ENCODE measurements at regions of chr2 and their contacts with region 1.

Region 1: GRCh38 chr2:121356058-121356640 is 71.1 kb upstream of the TFCP2L1 start:
- DNase-seq: peak; percentile 48
- ATAC-seq: peak; percentile 95
- H3K4me3 ChIP-seq: no peak overlapping the region
- H3K27ac ChIP-seq: no peak overlapping the region
- H3K4me1 ChIP-seq: peaks cover 0 to 9% of the 10 kb centered on the region in 2 experiments; a peak in 1 of 4 replicates
- H3K27me3 ChIP-seq: no peaks in the 10 kb centered on the region
- CTCF ChIP-seq: peak; percentile 76 to 82 (median 78)
- POLR2A ChIP-seq: no peak
- RAD21 ChIP-seq: peak; percentile 80

Region 2: DNA sequence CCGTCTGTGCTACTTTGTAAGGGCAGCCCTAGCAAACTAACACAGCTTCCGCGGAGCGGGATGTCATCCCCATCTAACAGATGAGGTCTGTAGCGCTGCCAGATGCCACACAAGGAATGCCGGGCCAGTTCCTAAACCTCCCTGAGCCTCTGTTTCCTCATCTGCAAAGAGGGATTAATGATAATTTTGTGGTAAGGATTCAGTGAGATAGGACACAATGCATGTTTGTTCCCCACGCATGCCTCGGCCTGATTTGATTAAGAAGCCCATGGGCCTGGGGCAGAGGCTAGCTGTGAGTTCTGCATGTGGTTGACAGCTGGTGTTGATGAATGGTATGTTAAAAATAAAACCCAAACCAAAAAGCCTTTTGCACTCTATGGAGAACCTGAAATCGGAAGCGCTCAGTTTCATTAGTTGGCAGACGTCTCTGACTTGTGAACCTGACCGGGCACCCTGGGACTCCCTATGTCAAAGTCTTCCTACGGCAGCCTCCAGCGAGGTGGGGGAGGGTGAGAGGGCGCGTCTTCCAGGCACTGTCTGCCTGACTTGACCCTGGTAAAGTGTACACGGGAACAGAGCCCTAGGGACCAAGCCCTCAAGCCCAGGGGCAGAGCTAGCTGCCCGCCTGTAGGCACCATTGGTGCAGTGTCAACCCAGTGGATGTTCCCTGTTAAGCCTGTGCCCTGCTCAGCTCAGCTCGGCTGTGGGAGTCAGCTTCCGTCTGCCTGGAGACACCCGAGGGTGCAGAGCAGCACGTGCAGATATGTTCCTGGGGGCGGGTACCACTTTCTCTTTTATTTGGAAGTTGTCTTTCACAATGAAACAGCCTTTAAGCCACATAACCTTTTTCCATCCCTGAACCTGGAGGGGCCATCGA is 1025.0 kb before region 1 on chr2:
- CTCF ChIA-PET with region 1: no interaction called
- POLR2A ChIA-PET with region 1: no interaction called
- RAD21 ChIA-PET with region 1: no interaction called
- intact Hi-C with region 1: no loop called
- DNase-seq: no peak
- ATAC-seq: no peak
- H3K4me3 ChIP-seq: no peak overlapping the region
- H3K27ac ChIP-seq: no peak overlapping the region
- H3K4me1 ChIP-seq: no peaks in the 10 kb centered on the region
- H3K27me3 ChIP-seq: 0 out of 2 replicates have a peak, but pooled peaks cover 3% of the 10 kb centered on the region
- CTCF ChIP-seq: no peak
- POLR2A ChIP-seq: no peak
- RAD21 ChIP-seq: no peak

Region 3: GRCh38 chr2:120703330-120703994 is 652.7 kb before region 1 on chr2:
- CTCF ChIA-PET with region 1: no interaction called
- POLR2A ChIA-PET with region 1: no interaction called
- RAD21 ChIA-PET with region 1: no interaction called
- intact Hi-C with region 1: loop called (anchors 5 kb)
- DNase-seq: peak; percentile 59
- ATAC-seq: peak; percentile 87
- H3K4me3 ChIP-seq: no peak overlapping the region
- H3K27ac ChIP-seq: no peak overlapping the region
- H3K4me1 ChIP-seq: peaks cover 16 to 40% of the 10 kb centered on the region in 2 experiments; a peak in 3 of 4 replicates
- H3K27me3 ChIP-seq: no peaks in the 10 kb centered on the region
- CTCF ChIP-seq: no peak
- POLR2A ChIP-seq: no peak
- RAD21 ChIP-seq: no peak

Region 4: GRCh38 chr2:121088251-121089165 is 267.6 kb before region 1 on chr2:
- CTCF ChIA-PET with region 1: interaction called, 21 read pairs
- POLR2A ChIA-PET with region 1: no interaction called
- RAD21 ChIA-PET with region 1: no interaction called
- intact Hi-C with region 1: loop called (anchors 1 kb)
- DNase-seq: no peak
- ATAC-seq: no peak
- H3K4me3 ChIP-seq: no peak overlapping the region
- H3K27ac ChIP-seq: no peak overlapping the region
- H3K4me1 ChIP-seq: no peaks in the 10 kb centered on the region
- H3K27me3 ChIP-seq: no peaks in the 10 kb centered on the region
- CTCF ChIP-seq: no peak
- POLR2A ChIP-seq: no peak
- RAD21 ChIP-seq: no peak

Region 5: GRCh38 chr2:121095257-121096080 is 260.7 kb before region 1 on chr2:
- CTCF ChIA-PET with region 1: interaction called, 73 read pairs
- POLR2A ChIA-PET with region 1: interaction called, 3 read pairs
- RAD21 ChIA-PET with region 1: interaction called, 14 read pairs
- intact Hi-C with region 1: loop called (anchors 1 kb)
- DNase-seq: peak; percentile 72
- ATAC-seq: peak; percentile 97
- H3K4me3 ChIP-seq: no peak overlapping the region
- H3K27ac ChIP-seq: no peak overlapping the region
- H3K4me1 ChIP-seq: peaks cover 0 to 9% of the 10 kb centered on the region in 2 experiments; a peak in 2 of 4 replicates
- H3K27me3 ChIP-seq: no peaks in the 10 kb centered on the region
- CTCF ChIP-seq: peak; percentile 82 to 87 (median 83)
- POLR2A ChIP-seq: no peak
- RAD21 ChIP-seq: peak; percentile 95

Measured in HCT116 (cell line).